ENCODE measurements at regions of chr2 and their contacts with region 1.

Region 1: GRCh38 chr2:39379643-39380524 is 57.2 kb downstream of the MAP4K3 start:
- DNase-seq: no peak
- ATAC-seq: peak; percentile 66
- H3K4me3 Mint-ChIP-seq: no peak overlapping the region
- H3K27ac Mint-ChIP-seq: no peak overlapping the region
- H3K4me1 Mint-ChIP-seq: peaks cover 24% of the 10 kb centered on the region
- H3K27me3 Mint-ChIP-seq: no peaks in the 10 kb centered on the region

Region 2: DNA sequence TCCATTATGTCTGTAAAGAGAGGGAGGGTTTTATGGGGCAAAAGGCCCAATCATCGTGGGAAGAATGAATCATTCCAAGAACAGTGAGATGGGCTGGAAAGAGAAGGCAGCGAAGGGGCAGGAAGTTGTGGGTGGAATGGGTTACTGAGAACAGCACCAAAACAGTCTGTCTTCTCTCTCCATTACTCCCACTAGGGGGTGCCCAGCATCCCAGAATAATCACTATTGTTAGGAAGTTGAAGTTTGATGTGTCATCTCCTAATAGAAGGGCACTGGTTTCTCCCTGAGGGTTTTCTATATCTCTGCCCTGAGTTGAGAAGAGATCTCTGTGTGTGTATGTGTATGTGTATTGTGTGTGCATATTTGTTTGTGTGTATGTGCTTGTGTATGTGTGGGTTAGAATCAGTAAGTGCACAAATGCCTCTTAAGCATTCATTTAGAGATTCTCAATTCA is 133.8 kb after region 1 on chr2:
- CTCF ChIA-PET with region 1: interaction called, 5 read pairs
- POLR2A ChIA-PET with region 1: no interaction called
- intact Hi-C with region 1: loop called (anchors 1 to 5 kb)
- DNase-seq: peak; percentile 84
- ATAC-seq: peak; percentile 83
- H3K4me3 Mint-ChIP-seq: peak overlapping the region; percentile 21
- H3K27ac Mint-ChIP-seq: peak overlapping the region; percentile 83
- H3K4me1 Mint-ChIP-seq: peaks cover 33% of the 10 kb centered on the region
- H3K27me3 Mint-ChIP-seq: peaks cover 3% of the 10 kb centered on the region

Region 3: GRCh38 chr2:39696838-39697237 is 317.0 kb after region 1 on chr2:
- CTCF ChIA-PET with region 1: no interaction called
- POLR2A ChIA-PET with region 1: no interaction called
- intact Hi-C with region 1: loop called in 1 of 2 experiments (anchors 1 kb)
- DNase-seq: no peak
- ATAC-seq: no peak
- H3K4me3 Mint-ChIP-seq: no peak overlapping the region
- H3K27ac Mint-ChIP-seq: no peak overlapping the region
- H3K4me1 Mint-ChIP-seq: no peaks in the 10 kb centered on the region
- H3K27me3 Mint-ChIP-seq: peaks cover 16% of the 10 kb centered on the region

Region 4: DNA sequence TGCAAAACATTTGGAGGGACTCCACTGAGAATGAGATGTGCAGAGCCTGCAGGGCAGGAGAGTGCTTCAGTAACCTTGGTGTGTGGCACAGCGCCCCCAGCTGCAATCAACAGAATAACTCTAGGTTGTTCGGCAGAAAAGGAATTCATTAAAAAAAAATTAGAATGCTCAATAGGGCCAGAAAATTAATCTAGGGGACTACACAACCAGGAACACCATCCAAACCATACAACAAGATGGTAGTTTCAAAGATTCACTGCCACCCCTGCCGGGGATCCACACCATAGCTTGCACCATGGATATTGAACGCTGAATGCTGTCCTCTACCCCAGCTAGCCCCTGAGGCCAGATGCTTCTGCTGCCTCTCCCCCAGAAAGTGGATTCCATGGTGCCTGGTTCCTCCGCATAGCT is 349.1 kb after region 1 on chr2:
- CTCF ChIA-PET with region 1: interaction called, 37 read pairs
- POLR2A ChIA-PET with region 1: no interaction called
- intact Hi-C with region 1: loop called (anchors 1 to 10 kb)
- DNase-seq: peak; percentile 71
- ATAC-seq: peak; percentile 63
- H3K4me3 Mint-ChIP-seq: no peak overlapping the region
- H3K27ac Mint-ChIP-seq: no peak overlapping the region
- H3K4me1 Mint-ChIP-seq: peaks cover 11% of the 10 kb centered on the region
- H3K27me3 Mint-ChIP-seq: peaks cover 11% of the 10 kb centered on the region

Measured in activated CD4-positive, alpha-beta T cell treated with anti-CD3 and anti-CD28 coated beads for 36 hours (primary cell).